Activated T-helper 1 cell treated with anti-CD3 and anti-CD28 coated beads, Interleukin-12 subunit alpha, Interleukin-12 subunit beta, Interleukin-2, Interleukin-4 antibody, amounts not matched to agents 30 ng/mL and 10 ng/mL and 1 ng/mL, durations not matched to agents 14 hours and 24 hours and 36 hours (primary cell): ENCODE measurements at regions of chr1 and their contacts with region 1.

Region 1: GRCh38 chr1:169711469-169712281 is at the start of gene SELL:
- DNase-seq: peak; percentile 69
- H3K4me3 Mint-ChIP-seq: peak within 1 kb of the TSS; percentile 93
- H3K27ac Mint-ChIP-seq: peak within 1 kb of the TSS; percentile 86
- H3K4me1 Mint-ChIP-seq: peaks cover 40% of the 10 kb centered on the region
- H3K27me3 Mint-ChIP-seq: peaks cover 18% of the 10 kb centered on the region
- total RNA-seq, gene SELL: 115 and 117 TPM in 2 replicates

Region 2: DNA sequence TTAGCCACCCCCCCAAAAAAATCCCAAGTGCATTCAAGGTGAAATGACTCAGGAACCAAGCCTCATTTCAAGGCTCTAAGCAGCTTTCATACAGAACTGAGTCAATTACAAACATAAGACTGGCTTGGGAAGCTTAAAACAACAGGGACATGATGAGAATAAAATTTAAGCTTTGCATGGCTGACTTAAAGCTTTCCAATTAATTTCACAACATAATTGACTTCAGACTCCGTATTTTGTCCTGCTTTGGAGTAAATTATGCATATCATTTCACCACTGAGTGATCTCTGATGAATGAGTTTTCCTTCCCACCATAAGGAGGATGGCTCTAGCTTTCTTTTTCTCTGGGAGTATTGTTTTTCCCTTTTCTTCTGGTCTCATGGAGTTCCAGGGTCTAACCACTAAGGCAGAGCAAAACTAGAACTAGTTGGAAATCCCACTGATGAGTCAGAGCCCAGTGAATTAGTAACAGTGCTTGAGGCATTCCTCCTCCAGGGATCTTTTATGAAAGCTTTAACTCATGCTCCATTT is 1240.7 kb before region 1 on chr1:
- intact Hi-C with region 1: no loop called
- DNase-seq: no peak
- H3K4me3 Mint-ChIP-seq: no peak overlapping the region
- H3K27ac Mint-ChIP-seq: peak overlapping the region; percentile 10
- H3K4me1 Mint-ChIP-seq: peaks cover 53% of the 10 kb centered on the region
- H3K27me3 Mint-ChIP-seq: no peaks in the 10 kb centered on the region

Region 3: GRCh38 chr1:169546087-169546995 is 165.3 kb before region 1 on chr1:
- intact Hi-C with region 1: loop called (anchors 1 kb)
- DNase-seq: peak; percentile 40
- H3K4me3 Mint-ChIP-seq: no peak overlapping the region
- H3K27ac Mint-ChIP-seq: no peak overlapping the region
- H3K4me1 Mint-ChIP-seq: peaks cover 9% of the 10 kb centered on the region
- H3K27me3 Mint-ChIP-seq: no peaks in the 10 kb centered on the region

Region 4: GRCh38 chr1:169601093-169601881 is 110.4 kb before region 1 on chr1:
- intact Hi-C with region 1: loop called (anchors 1 kb)
- DNase-seq: no peak
- H3K4me3 Mint-ChIP-seq: no peak overlapping the region
- H3K27ac Mint-ChIP-seq: peak overlapping the region; percentile 57
- H3K4me1 Mint-ChIP-seq: peaks cover 51% of the 10 kb centered on the region
- H3K27me3 Mint-ChIP-seq: no peaks in the 10 kb centered on the region

Region 5: DNA sequence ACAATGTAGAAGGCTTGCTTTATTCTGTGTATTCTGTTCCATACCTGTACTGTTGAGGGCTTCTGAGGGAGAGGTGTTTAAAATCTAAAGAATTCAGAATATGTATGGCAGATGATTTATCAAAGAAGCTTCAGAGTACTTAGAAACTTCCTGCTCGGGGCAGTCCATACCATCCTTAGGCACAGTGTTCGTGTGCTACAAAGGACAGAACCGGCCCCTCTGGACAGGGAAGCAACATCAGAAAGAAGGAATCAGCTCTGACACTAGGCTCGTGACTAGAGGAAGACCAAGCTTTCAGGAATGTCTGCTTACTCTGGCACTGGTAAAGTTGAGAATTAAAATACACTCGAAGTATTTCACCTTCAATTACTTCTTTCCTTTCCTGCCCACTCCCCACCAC is 95.9 kb before region 1 on chr1:
- intact Hi-C with region 1: no loop called
- DNase-seq: no peak
- H3K4me3 Mint-ChIP-seq: no peak overlapping the region
- H3K27ac Mint-ChIP-seq: no peak overlapping the region
- H3K4me1 Mint-ChIP-seq: peaks cover 16% of the 10 kb centered on the region
- H3K27me3 Mint-ChIP-seq: peaks cover 2% of the 10 kb centered on the region

Region 6: GRCh38 chr1:169680377-169681019 is 31.2 kb before region 1 on chr1:
- intact Hi-C with region 1: loop called (anchors 1 kb)
- DNase-seq: no peak
- H3K4me3 Mint-ChIP-seq: peak overlapping the region; percentile 3
- H3K27ac Mint-ChIP-seq: peak overlapping the region; percentile 81
- H3K4me1 Mint-ChIP-seq: peaks cover 67% of the 10 kb centered on the region
- H3K27me3 Mint-ChIP-seq: no peaks in the 10 kb centered on the region

Region 7: DNA sequence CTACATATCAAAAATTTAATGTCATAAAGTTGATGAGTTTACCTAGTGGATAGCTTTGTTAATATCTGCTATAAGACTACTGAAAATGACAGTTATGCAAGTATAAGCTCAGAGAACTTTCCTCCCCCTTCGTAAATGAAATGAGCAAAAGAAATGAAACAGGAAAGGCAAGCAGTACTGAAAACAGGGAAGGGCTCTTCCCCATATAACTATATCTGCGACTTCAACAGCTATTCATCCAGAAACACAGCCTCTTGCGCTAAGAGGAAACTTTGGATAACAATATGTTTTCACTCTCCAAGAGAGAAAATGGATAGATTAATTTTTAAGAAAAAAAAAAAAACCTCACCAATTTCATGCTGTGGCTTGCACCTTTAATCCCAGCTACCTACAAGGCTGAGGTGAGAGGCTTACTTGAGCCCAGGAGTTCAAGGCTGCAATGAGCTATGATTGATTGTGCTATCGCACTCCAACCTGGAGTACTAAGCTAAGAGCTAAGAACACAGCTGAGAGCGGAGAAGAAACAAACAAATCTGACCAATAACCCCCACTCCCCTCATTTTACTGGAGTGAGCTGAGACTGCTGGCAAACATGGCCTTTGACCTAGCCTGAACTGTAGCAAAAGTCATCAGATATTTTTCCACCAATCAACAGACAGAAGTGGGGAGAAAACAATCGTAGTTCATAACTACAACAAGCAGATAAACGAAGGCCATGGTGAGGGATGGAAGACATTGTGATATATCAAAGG is 54.1 kb after region 1 on chr1:
- intact Hi-C with region 1: no loop called
- DNase-seq: no peak
- H3K4me3 Mint-ChIP-seq: no peak overlapping the region
- H3K27ac Mint-ChIP-seq: no peak overlapping the region
- H3K4me1 Mint-ChIP-seq: no peaks in the 10 kb centered on the region
- H3K27me3 Mint-ChIP-seq: peaks cover 6% of the 10 kb centered on the region

Region 8: DNA sequence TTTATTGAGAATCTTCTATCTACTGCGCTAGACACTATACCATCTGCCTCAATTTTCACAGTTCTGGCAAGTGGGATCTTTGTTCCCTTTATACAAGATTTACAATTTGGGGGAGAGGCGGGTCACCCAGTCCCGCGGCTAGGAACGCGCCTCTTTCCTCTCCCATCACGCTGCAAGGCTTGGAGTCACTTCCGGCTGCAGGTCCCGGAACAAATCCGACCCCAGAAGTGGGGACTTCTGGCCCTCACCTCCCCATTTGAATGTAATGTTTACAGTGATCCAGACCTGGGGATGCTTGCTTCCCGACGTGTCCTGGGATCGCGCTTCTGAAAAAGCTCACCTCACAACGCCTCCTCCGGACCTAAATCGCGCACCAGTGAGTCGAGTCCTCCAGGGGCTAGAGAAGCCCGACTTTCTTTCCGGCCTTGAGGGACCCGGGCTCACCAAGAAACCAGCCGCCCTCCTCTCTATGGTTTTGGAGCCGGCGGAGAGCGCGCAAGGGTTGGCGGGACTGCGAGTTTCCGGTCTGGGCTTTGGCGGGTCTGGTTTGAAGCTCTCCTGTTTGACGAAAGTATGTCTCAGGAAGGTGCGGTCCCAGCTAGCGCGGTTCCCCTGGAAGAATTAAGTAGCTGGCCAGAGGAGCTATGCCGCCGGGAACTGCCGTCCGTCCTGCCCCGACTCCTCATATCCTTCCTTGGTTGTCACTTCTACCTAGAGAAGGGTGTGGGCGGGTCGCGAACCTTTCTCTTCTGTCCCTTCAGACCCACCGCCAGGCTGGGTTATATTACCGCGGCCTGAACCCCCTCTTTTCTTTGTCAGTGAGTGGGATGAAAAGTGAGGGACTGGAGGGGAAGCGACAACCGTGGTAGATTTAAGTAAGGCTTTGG is 83.1 kb after region 1 on chr1 and contains the start of gene METTL18:
- intact Hi-C with region 1: loop called (anchors 2 kb)
- DNase-seq: peak; percentile 90
- H3K4me3 Mint-ChIP-seq: peak within 1 kb of the TSS; percentile 87
- H3K27ac Mint-ChIP-seq: peak within 1 kb of the TSS; percentile 86
- H3K4me1 Mint-ChIP-seq: peaks cover 55% of the 10 kb centered on the region
- H3K27me3 Mint-ChIP-seq: no peaks in the 10 kb centered on the region
- total RNA-seq, gene METTL18: 9.0 and 9.3 TPM in 2 replicates